Activated B cell treated with CpG ODN at 0.5 μM for 24 hours (primary cell): ENCODE measurements at regions of chr5 and their contacts with region 1.

Region 1: GRCh38 chr5:138503487-138504270 is 38.4 kb downstream of the EGR1 start:
- DNase-seq: no peak
- ATAC-seq: peak; percentile 81
- H3K4me3 Mint-ChIP-seq: no peak overlapping the region
- H3K27ac Mint-ChIP-seq: no peak overlapping the region
- H3K4me1 Mint-ChIP-seq: no peaks in the 10 kb centered on the region
- H3K27me3 Mint-ChIP-seq: no peaks in the 10 kb centered on the region
- CTCF ChIP-seq: no peak

Region 2: GRCh38 chr5:138449501-138450239 is 54.0 kb before region 1 on chr5:
- CTCF ChIA-PET with region 1: interaction called, 76 read pairs
- POLR2A ChIA-PET with region 1: interaction called, 3 read pairs
- intact Hi-C with region 1: loop called (anchors 1 kb)
- DNase-seq: peak; percentile 75
- ATAC-seq: peak; percentile 98
- H3K4me3 Mint-ChIP-seq: no peak overlapping the region
- H3K27ac Mint-ChIP-seq: no peak overlapping the region
- H3K4me1 Mint-ChIP-seq: peaks cover 6% of the 10 kb centered on the region
- H3K27me3 Mint-ChIP-seq: peaks cover 4% of the 10 kb centered on the region
- CTCF ChIP-seq: peak; percentile 59